Common myeloid progenitor, CD34-positive (primary cell): ENCODE measurements at regions of chr7 and their contacts with region 1.

Region 1: DNA sequence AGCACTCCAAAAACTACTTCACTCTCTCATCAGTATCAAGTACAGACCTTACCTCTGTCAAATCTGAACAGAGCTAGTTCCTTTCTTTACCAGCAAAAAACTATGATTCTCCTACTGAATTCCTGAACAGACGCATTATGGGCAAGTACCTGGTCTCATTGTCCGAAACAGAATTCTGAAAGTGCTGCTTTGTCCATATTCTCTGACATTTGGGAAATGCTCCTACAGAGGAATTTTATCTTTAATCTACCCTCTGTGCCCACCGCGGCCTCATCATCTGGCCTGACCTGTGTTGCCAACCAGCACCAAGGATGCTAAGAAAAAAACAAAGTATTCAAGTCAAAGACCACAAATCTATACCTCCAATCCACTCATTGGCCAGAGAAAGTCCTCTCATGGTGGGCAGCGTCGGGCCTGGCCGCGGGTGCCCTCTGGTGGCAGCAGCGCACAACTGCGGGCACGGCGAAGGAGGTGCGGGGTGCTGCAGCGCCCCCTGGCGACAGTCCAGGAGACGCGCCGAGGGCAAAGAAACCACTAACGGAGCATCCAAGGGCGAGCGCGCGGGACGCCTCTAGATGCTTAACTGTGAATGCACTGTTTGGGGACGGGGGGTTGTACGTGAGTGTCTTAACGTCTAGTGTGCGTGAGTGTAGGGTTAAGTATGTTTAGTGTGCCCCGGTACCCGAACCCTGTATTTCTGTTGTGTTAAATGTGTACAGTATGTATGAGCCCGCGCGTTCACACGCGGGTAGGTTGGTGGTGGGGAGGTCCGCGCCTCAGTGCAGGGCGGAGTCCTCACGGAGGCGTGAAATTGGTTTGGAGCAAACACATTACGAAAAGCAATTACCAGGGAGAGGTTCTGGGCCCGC is 5.0 kb upstream of the GBX1 start:
- DNase-seq: peak; percentile 71 to 83 (median 81)
- H3K4me3 ChIP-seq: no peak overlapping the region
- H3K27ac ChIP-seq: no peak overlapping the region
- H3K4me1 ChIP-seq: peaks cover 0 to 10% (median 8%) of the 10 kb centered on the region in 4 experiments
- H3K27me3 ChIP-seq: peaks cover 4 to 72% (median 19%) of the 10 kb centered on the region in 5 experiments

Region 2: DNA sequence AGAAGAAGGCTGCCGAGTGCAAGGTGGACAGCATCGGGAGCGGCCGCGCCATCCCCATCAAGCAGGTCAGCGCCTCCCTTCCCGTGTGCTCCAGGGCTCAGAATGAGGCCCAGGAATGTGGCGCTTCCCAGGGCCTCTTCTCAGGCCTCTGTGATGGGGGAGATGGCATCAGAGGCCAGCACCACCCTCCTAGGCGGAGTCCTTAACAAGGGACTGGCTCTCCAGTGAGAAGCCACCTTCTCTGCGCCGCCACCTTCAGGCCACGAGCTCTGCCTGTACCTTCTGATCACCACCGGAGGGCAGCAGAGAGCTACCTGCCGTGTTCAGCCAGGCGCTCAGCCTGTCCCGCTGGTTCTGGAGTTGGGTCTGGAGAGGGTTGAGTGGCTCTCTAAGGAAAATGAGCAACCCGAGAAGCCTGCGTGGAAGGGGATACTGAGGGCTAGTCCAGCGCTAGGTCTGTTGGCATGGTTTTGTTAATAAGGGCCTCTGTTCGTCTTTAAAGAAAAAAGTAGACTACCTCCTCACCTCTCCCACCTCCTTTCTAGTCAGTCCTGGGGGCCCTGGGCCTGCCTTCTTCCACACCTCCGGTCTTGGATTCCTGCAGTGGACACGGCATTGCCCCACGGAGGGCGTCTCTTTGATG is 48.6 kb before region 1 on chr7:
- CTCF ChIA-PET with region 1: interaction called, 14 read pairs
- POLR2A ChIA-PET with region 1: no interaction called
- DNase-seq: peak; percentile 77 to 87 (median 83)
- H3K4me3 ChIP-seq: no peak overlapping the region
- H3K27ac ChIP-seq: no peak overlapping the region
- H3K4me1 ChIP-seq: no peaks in the 10 kb centered on the region
- H3K27me3 ChIP-seq: no peaks in the 10 kb centered on the region

Region 3: GRCh38 chr7:151152643-151153513 is 19.6 kb before region 1 on chr7:
- CTCF ChIA-PET with region 1: interaction called, 36 read pairs
- POLR2A ChIA-PET with region 1: no interaction called
- DNase-seq: peak in 1 of 3 donors; percentile 14
- H3K4me3 ChIP-seq: no peak overlapping the region
- H3K27ac ChIP-seq: no peak overlapping the region
- H3K4me1 ChIP-seq: no peaks in the 10 kb centered on the region
- H3K27me3 ChIP-seq: peaks cover 0 to 44% (median 35%) of the 10 kb centered on the region in 5 experiments